ENCODE measurements at regions of chr22 and their contacts with region 1.

Region 1: DNA sequence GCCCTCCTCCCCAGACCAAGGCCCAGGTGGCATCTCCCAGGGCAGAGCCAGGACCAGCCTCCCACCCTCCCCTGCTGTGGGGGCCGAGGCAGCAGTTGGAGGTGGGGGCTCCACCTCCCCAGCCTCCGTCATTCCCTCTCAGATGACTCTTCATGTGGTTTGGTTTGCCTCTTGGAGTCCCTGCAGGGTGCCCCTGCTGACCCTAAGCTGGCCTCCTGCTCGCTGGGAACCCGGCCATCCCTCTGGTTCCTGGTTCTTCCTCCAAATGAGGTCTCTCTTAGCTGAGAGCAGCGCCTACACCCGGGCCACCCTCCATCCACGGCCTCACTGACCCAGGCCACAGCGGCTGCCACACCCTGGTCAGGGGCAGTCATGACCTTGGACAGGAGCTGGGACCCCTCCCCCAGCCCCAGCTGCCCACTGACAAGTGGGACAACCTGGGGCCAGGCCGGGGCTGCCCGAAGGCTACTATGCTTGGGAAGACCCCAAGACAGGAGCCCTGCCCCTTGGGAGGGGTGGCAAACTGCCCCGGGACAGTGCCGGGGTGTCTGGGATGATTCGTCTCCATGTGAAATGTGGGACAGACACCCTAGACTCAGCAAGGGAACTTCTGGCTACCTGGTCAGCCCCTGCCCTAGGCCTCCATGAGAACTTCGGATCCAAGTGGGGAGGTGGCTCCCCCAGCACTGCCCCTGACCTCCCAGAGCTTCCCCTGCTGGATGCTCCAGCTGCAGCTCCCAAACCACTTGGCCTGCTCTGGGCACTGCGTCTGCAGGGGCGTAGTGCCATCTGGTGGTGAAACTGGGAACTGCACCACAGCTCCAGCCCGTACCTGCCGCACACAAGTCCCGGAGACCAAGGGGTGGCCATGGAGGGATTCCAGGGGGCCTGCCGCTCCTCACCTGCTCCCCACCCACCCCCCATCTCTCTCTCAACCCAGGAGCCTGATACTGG is 194.5 kb downstream of the IGLL1 start:
- DNase-seq: peak; percentile 80
- ATAC-seq: peak; percentile 87
- H3K4me3 Mint-ChIP-seq: no peak overlapping the region
- H3K27ac Mint-ChIP-seq: no peak overlapping the region
- H3K4me1 Mint-ChIP-seq: no peaks in the 10 kb centered on the region
- H3K27me3 Mint-ChIP-seq: peaks cover 14% of the 10 kb centered on the region
- CTCF ChIP-seq: peak; percentile 92

Region 2: DNA sequence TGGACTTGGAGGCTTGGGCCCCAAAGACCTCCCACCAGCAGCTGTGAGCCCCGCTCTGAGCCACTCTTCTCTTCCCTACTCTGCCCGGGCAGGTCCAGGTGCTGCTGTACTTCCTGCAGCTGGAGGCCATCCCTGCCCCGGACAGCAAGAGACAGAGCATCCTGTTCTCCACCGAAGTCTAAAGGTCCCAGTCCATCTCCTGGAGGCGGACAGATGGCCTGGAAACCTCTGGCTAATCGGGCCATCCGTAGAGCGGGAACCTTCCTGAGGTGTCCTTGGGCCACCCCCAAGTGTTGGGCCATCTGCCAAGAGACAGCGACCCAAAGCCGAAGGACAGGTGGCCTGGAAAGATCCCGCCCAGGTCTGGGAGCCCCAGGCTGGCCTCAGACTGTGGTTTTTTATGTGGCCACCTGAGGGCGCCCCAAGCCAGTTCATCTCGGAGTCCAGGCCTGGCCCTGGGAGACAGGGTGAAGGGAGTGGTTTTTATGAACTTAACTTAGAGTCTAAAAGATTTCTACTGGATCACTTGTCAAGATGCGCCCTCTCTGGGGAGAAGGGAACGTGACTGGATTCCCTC is 70.1 kb before region 1 on chr22:
- CTCF ChIA-PET with region 1: interaction called, 7 read pairs
- POLR2A ChIA-PET with region 1: no interaction called
- intact Hi-C with region 1: loop called (anchors 1 kb)
- DNase-seq: peak; percentile 53
- ATAC-seq: peak; percentile 31
- H3K4me3 Mint-ChIP-seq: no peak overlapping the region
- H3K27ac Mint-ChIP-seq: no peak overlapping the region
- H3K4me1 Mint-ChIP-seq: no peaks in the 10 kb centered on the region
- H3K27me3 Mint-ChIP-seq: no peaks in the 10 kb centered on the region
- CTCF ChIP-seq: no peak

Measured in activated B cell treated with CpG ODN at 0.5 μM for 24 hours (primary cell).